ENCODE measurements at regions of chr17 and their contacts with region 1.

Region 1: DNA sequence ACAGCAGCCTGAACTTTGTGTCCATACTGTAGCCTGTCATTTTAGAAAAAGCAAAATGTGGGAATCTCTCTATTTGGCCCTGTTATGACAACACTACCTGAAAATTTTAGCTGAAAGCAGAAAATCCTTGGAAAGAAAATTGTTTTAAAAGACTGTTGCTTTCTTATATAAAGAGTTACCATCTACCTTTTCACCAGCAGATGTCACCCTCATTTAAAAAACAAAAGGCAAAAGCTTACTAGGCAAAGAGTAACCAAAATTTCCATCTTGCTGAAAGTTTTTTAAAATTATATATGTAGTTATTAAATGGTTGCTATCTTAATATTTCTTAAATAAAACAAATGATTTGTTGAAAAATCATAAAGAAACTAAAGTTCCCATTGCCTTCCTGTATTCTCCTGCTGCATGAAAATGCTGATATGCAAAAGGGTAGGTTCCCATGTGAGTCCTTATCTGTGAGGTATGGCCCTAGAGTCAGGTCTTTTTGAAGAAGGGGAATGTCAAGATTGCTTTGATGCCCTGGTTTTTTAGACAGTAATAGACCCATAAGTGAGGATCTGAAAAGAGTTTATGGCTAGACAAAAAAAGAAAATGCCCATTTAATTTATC is 61.0 kb downstream of the TNRC6C start:
- DNase-seq: peak; percentile 56
- H3K4me3 ChIP-seq: no peak overlapping the region
- H3K27ac ChIP-seq: no peak overlapping the region
- H3K4me1 ChIP-seq: no peaks in the 10 kb centered on the region
- H3K27me3 ChIP-seq: no peaks in the 10 kb centered on the region
- CTCF ChIP-seq: peak; percentile 19 to 28
- POLR2A ChIP-seq: no peak

Region 2: DNA sequence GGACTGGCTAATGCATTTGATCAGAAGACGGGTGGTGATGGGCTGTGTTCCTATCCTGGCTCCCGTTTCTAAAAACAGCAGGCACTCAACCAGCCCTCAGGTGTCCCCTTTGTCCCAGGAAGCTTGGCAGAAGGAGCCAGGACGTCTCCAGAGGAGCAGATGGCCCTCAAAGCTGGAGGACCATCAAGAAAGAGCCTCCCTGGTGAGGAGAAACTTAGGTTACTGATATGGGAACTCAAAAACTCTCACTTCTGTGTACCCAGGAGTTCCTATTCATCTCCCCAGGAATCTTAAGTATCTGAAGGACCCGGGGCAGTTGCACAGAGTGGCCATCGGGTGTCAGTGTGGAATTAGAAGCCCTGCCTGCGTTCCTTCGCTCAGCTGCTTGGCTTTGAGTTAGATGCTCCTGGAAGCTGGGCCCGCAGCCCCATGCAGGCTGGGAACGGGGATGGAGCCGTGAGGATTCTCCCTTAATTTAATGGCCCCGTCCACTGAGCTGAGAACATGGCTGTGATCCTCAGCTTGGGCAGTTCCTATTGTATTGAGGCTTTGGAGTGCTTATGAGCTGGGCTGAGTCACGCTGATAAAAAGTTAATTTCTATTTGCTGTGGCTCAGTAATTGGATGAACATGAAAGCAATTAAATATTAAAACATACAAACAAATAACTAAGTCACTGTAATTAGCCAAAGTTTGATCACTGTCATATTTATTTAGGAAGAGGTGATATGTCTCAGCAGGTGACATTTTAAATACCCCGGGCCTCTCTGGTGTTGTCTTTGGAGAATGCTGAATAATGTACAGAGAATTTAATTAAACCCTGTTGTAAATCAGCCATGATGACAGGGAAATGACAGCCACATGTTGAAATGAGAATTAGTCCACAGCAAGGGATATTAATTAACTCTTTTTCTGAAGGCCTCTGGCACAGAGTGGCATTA is 476.6 kb before region 1 on chr17:
- CTCF ChIA-PET with region 1: interaction called, 98 read pairs
- POLR2A ChIA-PET with region 1: no interaction called
- dilution Hi-C with region 1: no loop called
- intact Hi-C with region 1: loop called (anchors 1 kb)
- DNase-seq: peak; percentile 71
- H3K4me3 ChIP-seq: no peak overlapping the region
- H3K27ac ChIP-seq: no peak overlapping the region
- H3K4me1 ChIP-seq: no peaks in the 10 kb centered on the region
- H3K27me3 ChIP-seq: peaks cover 28 to 30% of the 10 kb centered on the region in 2 experiments
- CTCF ChIP-seq: peak; percentile 84 to 87
- POLR2A ChIP-seq: no peak

Region 3: GRCh38 chr17:77999413-78000173 is 19.9 kb before region 1 on chr17:
- CTCF ChIA-PET with region 1: interaction called, 41 read pairs
- POLR2A ChIA-PET with region 1: no interaction called
- dilution Hi-C with region 1: no loop called
- intact Hi-C with region 1: no loop called
- DNase-seq: peak; percentile 66
- H3K4me3 ChIP-seq: no peak overlapping the region
- H3K27ac ChIP-seq: peak overlapping the region; percentile 79
- H3K4me1 ChIP-seq: peaks cover 39% of the 10 kb centered on the region
- H3K27me3 ChIP-seq: no peaks in the 10 kb centered on the region
- CTCF ChIP-seq: no peak
- POLR2A ChIP-seq: no peak

Region 4: DNA sequence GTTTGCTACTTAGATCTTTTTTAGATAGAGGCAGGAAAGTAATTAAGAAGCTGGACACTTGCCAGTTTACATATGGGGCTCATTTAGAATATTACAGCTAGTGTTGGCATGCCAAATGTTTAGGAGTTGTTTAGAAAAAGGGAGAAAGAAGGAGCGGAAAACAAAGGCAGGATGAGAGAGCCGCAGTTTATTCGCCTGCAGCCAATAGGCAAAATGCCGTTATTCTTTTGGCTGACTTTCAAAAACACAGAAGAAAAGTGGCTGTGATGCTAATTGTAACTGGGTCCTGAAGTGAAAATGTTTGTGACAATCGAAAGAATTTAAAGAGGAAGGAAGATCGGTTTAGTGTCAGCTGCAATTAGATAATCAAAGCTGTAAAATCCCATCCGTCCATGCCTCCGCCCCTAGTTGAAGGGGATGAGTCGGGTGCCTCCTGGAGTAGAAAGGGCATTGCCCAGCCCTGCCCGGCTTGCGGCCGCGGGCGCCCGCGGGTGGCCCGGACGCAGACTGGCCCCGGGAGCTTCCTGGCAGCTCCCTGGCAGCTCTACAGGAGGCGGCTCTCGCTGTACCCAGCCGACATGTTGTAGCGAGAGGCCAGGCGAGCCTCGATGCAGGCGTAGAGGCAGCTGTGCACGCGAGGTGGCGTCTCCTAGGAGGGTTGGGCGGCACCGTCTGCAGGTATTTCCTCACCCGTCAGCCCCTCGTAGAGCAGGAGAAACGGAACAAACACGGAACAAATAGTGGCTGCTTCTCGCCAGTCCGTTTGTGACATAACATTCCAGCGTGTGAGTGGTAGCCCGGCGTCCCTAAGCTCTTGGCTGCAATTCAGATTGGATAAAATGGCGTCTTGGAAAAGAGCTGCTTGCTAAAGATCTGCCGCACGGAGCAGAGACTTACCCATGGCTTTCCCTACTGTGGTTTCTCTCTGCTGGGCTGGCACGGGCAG is 21.2 kb after region 1 on chr17:
- CTCF ChIA-PET with region 1: interaction called, 33 read pairs
- POLR2A ChIA-PET with region 1: no interaction called
- dilution Hi-C with region 1: no loop called
- intact Hi-C with region 1: no loop called
- DNase-seq: peak; percentile 85
- H3K4me3 ChIP-seq: peak overlapping the region; percentile 11 to 79 (median 54)
- H3K27ac ChIP-seq: peak overlapping the region; percentile 87
- H3K4me1 ChIP-seq: peaks cover 21% of the 10 kb centered on the region
- H3K27me3 ChIP-seq: no peaks in the 10 kb centered on the region
- CTCF ChIP-seq: no peak
- POLR2A ChIP-seq: peak; percentile 92

Region 5: DNA sequence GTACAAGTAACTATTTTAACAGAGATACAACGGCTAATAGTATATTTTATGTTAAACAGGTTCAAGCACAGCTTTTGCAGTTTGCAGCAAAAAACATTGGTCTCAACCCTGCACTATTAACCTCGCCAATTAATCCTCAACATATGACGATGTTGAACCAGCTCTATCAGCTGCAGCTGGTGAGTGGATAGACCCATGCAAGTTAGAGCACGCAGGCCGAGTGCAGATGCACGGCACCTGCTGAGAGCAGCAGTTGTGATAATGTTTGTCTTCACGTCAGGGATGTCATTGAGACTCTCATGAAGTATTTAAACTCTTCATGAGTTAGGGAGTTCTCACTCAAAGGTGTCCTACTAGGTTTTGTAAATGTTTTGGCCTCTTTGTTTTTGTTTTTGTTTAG is 63.5 kb after region 1 on chr17:
- CTCF ChIA-PET with region 1: interaction called, 116 read pairs
- POLR2A ChIA-PET with region 1: no interaction called
- dilution Hi-C with region 1: no loop called
- intact Hi-C with region 1: loop called (anchors 1 kb)
- DNase-seq: no peak
- H3K4me3 ChIP-seq: no peak overlapping the region
- H3K27ac ChIP-seq: no peak overlapping the region
- H3K4me1 ChIP-seq: no peaks in the 10 kb centered on the region
- H3K27me3 ChIP-seq: no peaks in the 10 kb centered on the region
- CTCF ChIP-seq: no peak
- POLR2A ChIP-seq: no peak

Region 6: GRCh38 chr17:78120971-78121800 is 101.7 kb after region 1 on chr17:
- CTCF ChIA-PET with region 1: no interaction called
- POLR2A ChIA-PET with region 1: no interaction called
- dilution Hi-C with region 1: no loop called
- intact Hi-C with region 1: no loop called
- DNase-seq: no peak
- H3K4me3 ChIP-seq: no peak overlapping the region
- H3K27ac ChIP-seq: no peak overlapping the region
- H3K4me1 ChIP-seq: no peaks in the 10 kb centered on the region
- H3K27me3 ChIP-seq: no peaks in the 10 kb centered on the region
- CTCF ChIP-seq: no peak
- POLR2A ChIP-seq: no peak

Region 7: DNA sequence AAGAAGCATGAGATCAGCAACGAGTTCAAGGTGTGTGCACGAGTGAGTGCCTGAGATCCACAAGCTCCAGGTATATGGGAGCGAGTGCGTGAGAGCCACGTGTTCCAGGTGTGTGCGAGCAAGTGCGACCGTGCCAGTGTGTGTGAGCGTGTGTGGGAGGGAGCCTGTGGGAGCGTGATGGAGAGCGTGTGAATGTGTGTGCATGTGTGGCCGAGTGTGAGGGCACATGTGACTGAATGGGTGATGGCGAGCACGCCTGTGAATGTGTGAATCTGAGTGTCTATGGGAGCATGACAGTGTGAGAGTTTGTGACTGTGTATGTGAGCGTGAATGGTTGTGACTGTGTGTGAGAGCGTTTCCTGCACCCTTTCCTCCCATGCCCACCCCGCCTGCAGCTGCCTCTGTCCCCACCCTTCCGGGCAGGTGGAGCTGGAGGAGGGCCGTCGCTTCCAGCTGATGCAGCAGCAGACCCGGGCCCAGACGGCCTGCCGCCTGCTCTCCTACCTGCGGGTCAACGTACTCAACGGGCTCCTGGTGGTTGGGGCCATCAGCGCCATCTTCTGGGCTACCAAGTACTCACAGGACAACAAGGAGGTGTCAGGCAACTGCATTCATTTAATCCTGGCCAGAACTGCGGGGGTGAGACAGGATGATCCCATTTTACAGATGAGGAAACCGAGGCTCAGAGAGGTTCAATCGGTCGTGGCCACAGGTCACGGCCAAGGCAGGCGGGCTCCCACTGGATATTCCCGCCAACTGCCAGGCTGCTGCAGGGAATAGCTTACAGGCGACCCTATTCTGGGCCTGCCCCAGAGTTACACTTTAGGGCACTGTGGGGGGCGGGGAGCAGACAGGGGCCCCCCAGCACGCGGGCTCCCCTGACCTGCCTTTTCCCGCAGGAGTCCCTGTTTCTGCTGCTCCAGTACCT is 114.8 kb after region 1 on chr17:
- CTCF ChIA-PET with region 1: interaction called, 18 read pairs
- POLR2A ChIA-PET with region 1: no interaction called
- dilution Hi-C with region 1: no loop called
- intact Hi-C with region 1: no loop called
- DNase-seq: peak; percentile 52
- H3K4me3 ChIP-seq: no peak overlapping the region
- H3K27ac ChIP-seq: no peak overlapping the region
- H3K4me1 ChIP-seq: peaks cover 11% of the 10 kb centered on the region
- H3K27me3 ChIP-seq: no peaks in the 10 kb centered on the region
- CTCF ChIP-seq: peak; percentile 53 to 76
- POLR2A ChIP-seq: no peak

Region 8: DNA sequence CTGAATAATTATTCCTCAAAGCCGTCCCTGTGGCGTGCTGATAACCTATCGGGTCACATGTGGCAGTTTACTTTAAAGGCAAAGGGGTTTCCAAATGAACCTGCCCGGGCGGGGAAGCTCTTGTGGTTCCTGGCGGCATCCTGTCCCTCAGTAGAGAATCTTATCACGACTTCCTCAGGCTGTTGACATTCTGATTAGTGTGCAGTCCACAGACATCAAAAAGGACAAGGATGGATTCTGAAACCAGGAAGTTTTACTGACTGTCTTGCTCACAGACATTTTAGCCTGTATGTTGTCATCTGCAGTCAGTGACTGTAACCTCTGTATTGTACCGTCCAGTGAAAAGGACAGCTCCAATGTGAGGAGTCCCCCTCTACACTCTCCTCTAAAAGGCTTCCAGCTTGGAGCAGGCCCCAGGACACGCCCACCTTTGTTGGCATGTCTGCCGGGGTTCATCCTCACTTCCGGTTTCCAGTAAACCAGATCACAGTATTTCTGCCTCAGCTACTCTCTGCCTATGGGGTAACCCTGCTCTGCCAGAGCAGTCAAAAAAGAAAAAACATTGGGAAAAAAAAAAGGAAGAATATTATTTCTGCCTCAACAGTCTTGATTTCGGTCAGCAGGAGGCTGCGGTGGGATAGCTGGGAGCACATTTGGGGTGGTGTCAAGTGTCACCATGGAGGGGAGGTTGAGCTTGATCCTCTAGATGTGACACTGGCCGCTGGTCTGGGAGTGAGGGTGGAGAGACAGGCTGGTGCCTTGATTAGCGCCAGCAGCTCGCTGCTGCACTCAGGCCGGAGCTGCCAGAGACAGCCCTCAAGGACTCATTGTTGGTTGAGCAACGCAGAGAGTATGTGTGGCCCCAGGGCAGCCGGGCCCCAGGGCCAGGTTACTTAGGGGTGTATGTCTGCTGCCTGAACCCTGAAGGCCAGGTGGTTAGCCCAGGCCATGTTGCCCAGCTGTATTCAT is 646.8 kb after region 1 on chr17:
- CTCF ChIA-PET with region 1: no interaction called
- POLR2A ChIA-PET with region 1: no interaction called
- dilution Hi-C with region 1: no loop called
- intact Hi-C with region 1: no loop called
- DNase-seq: peak; percentile 94
- H3K4me3 ChIP-seq: no peak overlapping the region
- H3K27ac ChIP-seq: peak overlapping the region; percentile 84
- H3K4me1 ChIP-seq: peaks cover 24% of the 10 kb centered on the region
- H3K27me3 ChIP-seq: peaks cover 0 to 5% of the 10 kb centered on the region in 2 experiments
- CTCF ChIP-seq: no peak
- POLR2A ChIP-seq: peak; percentile 73